Naive thymus-derived CD4-positive, alpha-beta T cell (primary cell): ENCODE measurements at regions of chr12 and their contacts with region 1.

Region 1: DNA sequence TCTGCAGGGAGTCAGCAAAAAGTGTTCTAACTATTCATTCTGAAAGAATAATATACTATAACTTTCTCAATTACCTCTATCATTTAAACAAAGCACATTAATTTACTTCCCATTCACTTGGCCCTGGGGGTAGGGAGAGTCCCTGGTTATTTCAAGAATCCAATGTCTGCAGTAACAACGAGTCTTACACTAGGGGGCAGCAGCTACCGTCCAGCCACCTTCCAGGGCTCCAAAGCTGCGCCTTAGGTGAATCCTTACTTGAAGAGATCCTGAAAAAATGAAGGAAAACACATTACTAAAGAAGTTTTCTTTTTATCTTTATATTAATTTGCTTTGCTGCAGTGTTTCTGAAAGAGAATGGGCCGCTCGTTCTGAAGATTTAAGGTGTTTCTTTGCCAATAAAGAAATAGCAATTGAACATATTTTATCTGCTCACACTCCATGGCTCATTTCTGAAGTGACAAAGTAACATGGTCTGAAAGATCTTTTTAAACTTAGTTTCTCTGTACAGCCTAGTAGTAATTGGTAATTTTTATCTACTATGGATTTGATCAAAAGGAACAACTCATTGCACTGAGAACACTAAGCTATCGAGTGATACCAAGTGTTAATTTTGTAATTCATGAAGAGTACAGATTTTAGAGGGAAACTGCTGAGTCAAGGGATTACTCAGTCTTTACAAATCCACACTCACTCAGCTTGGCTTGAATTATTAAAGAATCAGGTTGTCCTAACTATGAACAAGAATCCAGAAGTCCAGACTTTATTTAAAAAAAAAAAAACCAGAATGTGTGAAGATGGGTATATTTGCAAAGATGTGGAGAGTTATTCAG is 27.6 kb downstream of the BHLHE41 start:
- DNase-seq: peak; percentile 19 to 64 (median 53)
- ATAC-seq: peak; percentile 94
- H3K4me3 ChIP-seq: no peak overlapping the region
- H3K4me3 Mint-ChIP-seq: no peak overlapping the region
- H3K27ac ChIP-seq: no peak overlapping the region
- H3K27ac Mint-ChIP-seq: no peak overlapping the region
- H3K4me1 ChIP-seq: no peaks in the 10 kb centered on the region
- H3K4me1 Mint-ChIP-seq: no peaks in the 10 kb centered on the region
- H3K27me3 ChIP-seq: no peaks in the 10 kb centered on the region
- H3K27me3 Mint-ChIP-seq: peaks cover 4 to 37% (median 14%) of the 10 kb centered on the region in 5 donors

Region 2: GRCh38 chr12:25573346-25573745 is 523.9 kb before region 1 on chr12:
- CTCF ChIA-PET with region 1: no interaction called
- POLR2A ChIA-PET with region 1: no interaction called
- intact Hi-C with region 1: no loop called
- DNase-seq: no peak
- ATAC-seq: no peak
- H3K4me3 ChIP-seq: no peak overlapping the region
- H3K4me3 Mint-ChIP-seq: no peak overlapping the region
- H3K27ac ChIP-seq: no peak overlapping the region
- H3K27ac Mint-ChIP-seq: no peak overlapping the region
- H3K4me1 ChIP-seq: no peaks in the 10 kb centered on the region
- H3K4me1 Mint-ChIP-seq: peaks cover 0 to 2% (median 0%) of the 10 kb centered on the region in 7 donors
- H3K27me3 ChIP-seq: no peaks in the 10 kb centered on the region
- H3K27me3 Mint-ChIP-seq: peaks cover 0 to 5% (median 0%) of the 10 kb centered on the region in 5 donors

Region 3: DNA sequence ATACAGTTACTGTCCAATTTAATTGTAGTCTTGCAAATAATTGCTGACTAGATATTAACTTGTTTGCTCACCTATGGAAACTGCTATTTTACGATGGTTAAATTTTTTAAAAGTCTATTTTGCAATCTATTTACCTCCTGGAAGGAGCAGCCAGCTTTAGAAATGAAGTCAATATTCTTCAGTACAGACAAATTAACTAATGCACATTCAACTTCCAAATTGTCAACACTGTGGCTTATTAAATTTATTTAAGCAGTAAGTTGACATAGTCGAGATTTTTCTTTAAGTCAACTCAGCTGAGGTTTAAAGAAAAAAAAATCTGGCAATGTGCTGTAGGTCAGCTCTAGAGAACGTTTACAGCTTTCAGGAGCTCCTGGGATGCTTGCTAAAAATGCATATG is 319.3 kb after region 1 on chr12:
- CTCF ChIA-PET with region 1: no interaction called
- POLR2A ChIA-PET with region 1: no interaction called
- intact Hi-C with region 1: loop called in 1 of 2 experiments (anchors 10 kb)
- DNase-seq: no peak
- ATAC-seq: no peak
- H3K4me3 ChIP-seq: no peak overlapping the region
- H3K4me3 Mint-ChIP-seq: no peak overlapping the region
- H3K27ac ChIP-seq: no peak overlapping the region
- H3K27ac Mint-ChIP-seq: no peak overlapping the region
- H3K4me1 ChIP-seq: no peaks in the 10 kb centered on the region
- H3K4me1 Mint-ChIP-seq: peaks cover 0 to 4% (median 0%) of the 10 kb centered on the region in 7 donors
- H3K27me3 ChIP-seq: no peaks in the 10 kb centered on the region
- H3K27me3 Mint-ChIP-seq: no peaks in the 10 kb centered on the region

Region 4: DNA sequence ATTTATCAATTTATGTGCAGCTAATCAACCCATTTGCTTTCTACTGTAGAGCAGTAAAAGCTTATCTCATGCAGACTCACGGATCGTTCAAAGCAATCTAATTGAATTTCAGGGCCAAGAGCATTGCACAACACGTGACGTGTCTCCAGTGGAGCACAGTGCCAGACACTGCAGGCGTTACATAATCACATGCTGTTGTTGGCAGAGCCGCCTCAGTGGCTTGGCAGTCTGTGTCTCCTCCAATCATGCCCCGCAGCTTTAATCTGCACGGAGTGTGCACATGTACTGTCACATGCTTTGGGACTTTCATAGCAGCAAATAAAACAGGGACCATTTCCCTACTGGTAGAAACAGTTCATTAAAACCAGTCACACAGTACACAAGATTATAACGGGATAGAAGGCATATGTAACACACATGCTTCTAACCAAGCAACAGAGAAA is 426.5 kb after region 1 on chr12:
- CTCF ChIA-PET with region 1: interaction called, 3 read pairs
- POLR2A ChIA-PET with region 1: no interaction called
- intact Hi-C with region 1: loop called in 1 of 2 experiments (anchors 1 kb)
- DNase-seq: no peak
- ATAC-seq: peak; percentile 85
- H3K4me3 ChIP-seq: no peak overlapping the region
- H3K4me3 Mint-ChIP-seq: no peak overlapping the region
- H3K27ac ChIP-seq: no peak overlapping the region
- H3K27ac Mint-ChIP-seq: no peak overlapping the region
- H3K4me1 ChIP-seq: no peaks in the 10 kb centered on the region
- H3K4me1 Mint-ChIP-seq: peaks cover 8 to 27% (median 18%) of the 10 kb centered on the region in 7 donors
- H3K27me3 ChIP-seq: no peaks in the 10 kb centered on the region
- H3K27me3 Mint-ChIP-seq: no peaks in the 10 kb centered on the region

Region 5: DNA sequence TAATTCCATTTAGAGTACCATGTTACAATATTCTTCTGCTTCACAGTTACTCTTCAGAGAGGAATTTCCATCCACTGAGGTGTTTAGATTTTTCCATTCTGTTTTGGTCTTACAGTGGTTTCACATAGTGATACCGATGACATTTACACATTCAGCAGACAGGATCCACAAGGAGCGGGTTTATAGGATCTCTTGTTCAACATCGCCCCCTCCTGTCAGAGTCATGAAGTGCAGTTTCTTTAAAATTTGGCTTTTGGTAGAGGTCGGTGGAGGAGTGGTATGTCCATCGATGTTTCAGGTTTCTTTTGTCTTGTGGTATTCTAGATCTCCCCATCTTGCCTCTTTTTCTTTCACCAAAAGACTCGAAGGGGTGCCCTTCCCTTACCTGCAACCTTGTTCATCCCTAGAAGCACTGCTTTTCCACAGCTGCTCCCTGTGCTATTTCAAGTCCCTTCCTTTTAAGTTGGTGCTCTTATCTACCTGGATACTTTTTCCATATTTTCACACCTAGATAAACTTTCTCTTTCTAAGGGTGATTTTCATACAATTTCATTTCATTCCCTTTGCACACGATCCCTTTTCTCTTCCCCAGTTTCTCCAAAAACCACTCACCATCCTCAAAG is 554.4 kb after region 1 on chr12:
- CTCF ChIA-PET with region 1: no interaction called
- POLR2A ChIA-PET with region 1: no interaction called
- intact Hi-C with region 1: loop called (anchors 1 kb)
- DNase-seq: peak in 2 of 9 donors; percentile 27 to 36
- ATAC-seq: peak; percentile 50
- H3K4me3 ChIP-seq: no peak overlapping the region
- H3K4me3 Mint-ChIP-seq: no peak overlapping the region
- H3K27ac ChIP-seq: no peak overlapping the region
- H3K27ac Mint-ChIP-seq: no peak overlapping the region
- H3K4me1 ChIP-seq: no peaks in the 10 kb centered on the region
- H3K4me1 Mint-ChIP-seq: peaks cover 0 to 4% (median 0%) of the 10 kb centered on the region in 7 donors
- H3K27me3 ChIP-seq: no peaks in the 10 kb centered on the region
- H3K27me3 Mint-ChIP-seq: no peaks in the 10 kb centered on the region

Region 6: DNA sequence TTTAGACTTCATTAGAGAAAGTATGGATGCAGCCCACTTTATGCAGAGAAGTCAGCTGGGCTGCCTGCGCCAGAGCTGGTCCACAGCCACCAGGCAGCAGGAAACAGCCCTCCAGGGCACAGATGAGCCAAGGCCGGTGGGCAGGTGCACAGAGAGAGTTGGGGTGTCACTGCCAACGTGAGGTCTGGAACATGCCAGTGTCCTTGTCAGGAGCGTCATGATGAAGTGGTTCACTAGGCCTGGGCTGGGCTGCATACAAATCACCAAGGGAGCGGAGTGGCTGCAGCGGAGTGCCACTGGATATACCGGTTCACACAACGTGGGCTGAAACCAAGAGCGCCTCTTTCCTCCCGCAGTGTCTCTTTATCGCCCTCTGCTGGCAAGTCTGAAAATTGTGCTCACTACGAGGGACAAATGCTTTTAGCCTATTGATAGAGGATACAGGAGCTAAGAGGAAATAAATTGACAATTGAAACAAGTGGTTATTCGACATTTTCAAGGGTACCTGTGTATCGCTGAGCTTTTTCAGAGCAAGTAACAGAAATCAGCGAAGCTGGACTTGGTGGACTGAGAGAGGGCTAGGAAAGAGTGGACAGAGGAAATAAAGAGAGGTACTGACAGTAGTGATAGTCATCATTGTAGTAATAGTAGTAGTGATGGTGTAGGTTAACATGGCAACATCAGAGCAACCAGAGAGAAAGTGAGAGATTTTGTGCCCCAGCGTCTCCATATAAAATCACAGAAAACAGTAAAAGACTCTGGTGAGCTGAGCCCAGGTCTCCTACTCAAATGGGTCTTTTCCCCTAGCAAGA is 787.7 kb after region 1 on chr12:
- CTCF ChIA-PET with region 1: interaction called, 3 read pairs
- POLR2A ChIA-PET with region 1: no interaction called
- intact Hi-C with region 1: loop called (anchors 1 to 2 kb)
- DNase-seq: peak; percentile 62 to 88 (median 81)
- ATAC-seq: peak; percentile 99
- H3K4me3 ChIP-seq: peak overlapping the region; percentile 46
- H3K4me3 Mint-ChIP-seq: peak overlapping the region; percentile 46 to 80 (median 64)
- H3K27ac ChIP-seq: no peak overlapping the region
- H3K27ac Mint-ChIP-seq: no peak overlapping the region
- H3K4me1 ChIP-seq: peaks cover 0 to 3% of the 10 kb centered on the region in 2 donors
- H3K4me1 Mint-ChIP-seq: peaks cover 4 to 13% (median 7%) of the 10 kb centered on the region in 7 donors
- H3K27me3 ChIP-seq: no peaks in the 10 kb centered on the region
- H3K27me3 Mint-ChIP-seq: peaks cover 3 to 26% (median 6%) of the 10 kb centered on the region in 5 donors

Region 7: GRCh38 chr12:27305673-27306456 is 1208.6 kb after region 1 on chr12:
- CTCF ChIA-PET with region 1: interaction called, 3 read pairs
- POLR2A ChIA-PET with region 1: no interaction called
- intact Hi-C with region 1: loop called in 1 of 2 experiments (anchors 2 kb)
- DNase-seq: peak in 6 of 9 donors; percentile 20 to 48 (median 34)
- ATAC-seq: no peak
- H3K4me3 ChIP-seq: no peak overlapping the region
- H3K4me3 Mint-ChIP-seq: no peak overlapping the region
- H3K27ac ChIP-seq: no peak overlapping the region
- H3K27ac Mint-ChIP-seq: peak overlapping the region in 6 of 9 donors; percentile 1 to 67 (median 16)
- H3K4me1 ChIP-seq: no peaks in the 10 kb centered on the region
- H3K4me1 Mint-ChIP-seq: peaks cover 0 to 15% (median 0%) of the 10 kb centered on the region in 7 donors
- H3K27me3 ChIP-seq: no peaks in the 10 kb centered on the region
- H3K27me3 Mint-ChIP-seq: no peaks in the 10 kb centered on the region